ENCODE measurements at regions of chr10 and their contacts with region 1.

Region 1: DNA sequence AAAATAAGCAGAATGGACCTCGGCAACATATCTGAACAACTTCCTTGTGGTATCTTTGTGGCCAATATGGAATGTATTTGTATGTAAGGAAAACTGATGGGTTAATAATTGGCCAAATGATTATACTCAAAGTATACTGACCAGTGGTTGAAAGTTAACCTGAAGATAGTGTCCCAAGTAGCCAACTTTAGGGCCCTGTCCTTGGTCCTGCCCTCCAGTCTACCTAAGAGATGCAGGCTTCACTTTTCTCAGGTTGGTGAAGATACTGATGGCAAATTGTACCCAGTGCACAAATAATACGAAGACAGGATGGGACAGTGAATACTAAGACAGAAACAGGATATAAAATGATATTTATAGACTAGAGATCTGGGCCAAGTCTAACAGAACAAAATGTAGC is 109.2 kb downstream of the SORCS3 start:
- DNase-seq: no peak

Region 2: DNA sequence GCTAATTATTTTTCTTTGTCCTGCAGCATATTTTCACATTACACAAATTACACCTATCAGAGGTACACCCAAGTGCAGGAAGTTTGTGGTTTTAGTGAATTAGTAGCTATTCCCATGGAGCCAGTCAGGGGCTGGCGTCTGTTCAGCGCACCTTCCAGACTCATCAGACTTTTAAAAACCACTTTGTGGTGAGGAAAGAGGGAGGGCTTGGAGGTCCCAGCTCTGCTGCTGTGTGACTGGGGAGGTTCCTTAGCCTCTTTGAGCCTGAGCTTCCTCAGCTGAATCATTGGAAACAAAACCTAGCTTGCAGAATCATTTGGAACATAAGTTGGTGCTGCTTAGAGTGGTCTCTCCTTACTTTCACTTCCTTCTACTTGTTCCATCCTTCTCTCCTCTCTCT is 66.2 kb after region 1 on chr10:
- intact Hi-C with region 1: no loop called
- DNase-seq: no peak

Region 3: DNA sequence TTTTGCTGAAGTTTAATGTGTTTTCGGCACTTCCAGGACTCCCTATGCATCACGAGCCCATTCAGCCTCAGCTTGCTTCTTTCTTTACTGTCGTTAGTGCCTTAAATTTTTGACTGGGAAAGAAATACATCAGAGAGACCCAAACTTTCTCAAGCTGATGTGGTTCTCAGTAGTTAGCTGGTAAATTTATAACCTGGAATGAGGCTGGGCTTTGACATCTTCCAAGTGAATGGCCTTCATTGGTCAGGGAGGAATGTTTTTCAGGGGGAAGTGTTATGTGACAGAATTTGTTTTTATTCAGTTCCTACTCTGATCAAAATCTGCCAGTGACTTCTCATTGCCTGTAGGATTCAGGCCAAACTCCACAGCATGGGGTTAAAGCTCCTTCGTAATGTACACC is 187.7 kb after region 1 on chr10:
- intact Hi-C with region 1: loop called in 1 of 2 experiments (anchors 2 kb)
- DNase-seq: no peak

Region 4: DNA sequence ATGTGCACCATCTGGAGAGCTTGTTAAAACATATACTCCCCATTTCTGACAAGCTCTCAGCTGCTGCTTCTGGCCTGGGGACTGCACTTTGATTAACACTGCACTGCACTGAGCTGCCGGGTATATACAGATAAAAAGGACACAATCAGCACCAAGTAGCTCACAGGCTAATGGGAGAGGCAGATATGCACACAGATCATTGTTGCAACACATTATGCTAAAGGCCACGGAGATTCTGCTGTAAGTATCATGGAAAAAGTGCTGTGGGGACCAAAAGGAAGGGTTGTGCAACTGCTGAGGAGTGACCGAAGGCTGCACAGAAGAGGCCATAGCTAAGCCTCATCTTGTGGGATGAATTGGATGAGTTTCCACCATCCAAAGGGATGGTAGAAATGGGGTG is 346.0 kb after region 1 on chr10:
- intact Hi-C with region 1: no loop called
- DNase-seq: no peak